Ascending aorta (tissue), 2 donors: ENCODE measurements at regions of chr10 and their contacts with region 1.

Region 1: GRCh38 chr10:95561182-95562075 is at the start of gene SORBS1:
- DNase-seq: peak; percentile 89 to 99
- H3K4me3 ChIP-seq: peak within 1 kb of the TSS; percentile 80 to 83
- H3K27ac ChIP-seq: peak within 1 kb of the TSS; percentile 78 to 91
- H3K4me1 ChIP-seq: peaks cover 0 to 6% of the 10 kb centered on the region in 2 donors
- H3K27me3 ChIP-seq: no peaks in the 10 kb centered on the region
- CTCF ChIP-seq: no peak
- total RNA-seq, gene SORBS1: 416 TPM

Region 2: GRCh38 chr10:95374597-95375209 is 186.7 kb before region 1 on chr10:
- intact Hi-C with region 1: loop called (anchors 5 kb)
- DNase-seq: peak in 1 of 2 donors; percentile 86
- H3K4me3 ChIP-seq: no peak overlapping the region
- H3K27ac ChIP-seq: peak overlapping the region; percentile 74 to 89
- H3K4me1 ChIP-seq: peaks cover 8 to 54% of the 10 kb centered on the region in 2 donors
- H3K27me3 ChIP-seq: no peaks in the 10 kb centered on the region
- CTCF ChIP-seq: peak; percentile 79 to 85 (median 85)

Region 3: DNA sequence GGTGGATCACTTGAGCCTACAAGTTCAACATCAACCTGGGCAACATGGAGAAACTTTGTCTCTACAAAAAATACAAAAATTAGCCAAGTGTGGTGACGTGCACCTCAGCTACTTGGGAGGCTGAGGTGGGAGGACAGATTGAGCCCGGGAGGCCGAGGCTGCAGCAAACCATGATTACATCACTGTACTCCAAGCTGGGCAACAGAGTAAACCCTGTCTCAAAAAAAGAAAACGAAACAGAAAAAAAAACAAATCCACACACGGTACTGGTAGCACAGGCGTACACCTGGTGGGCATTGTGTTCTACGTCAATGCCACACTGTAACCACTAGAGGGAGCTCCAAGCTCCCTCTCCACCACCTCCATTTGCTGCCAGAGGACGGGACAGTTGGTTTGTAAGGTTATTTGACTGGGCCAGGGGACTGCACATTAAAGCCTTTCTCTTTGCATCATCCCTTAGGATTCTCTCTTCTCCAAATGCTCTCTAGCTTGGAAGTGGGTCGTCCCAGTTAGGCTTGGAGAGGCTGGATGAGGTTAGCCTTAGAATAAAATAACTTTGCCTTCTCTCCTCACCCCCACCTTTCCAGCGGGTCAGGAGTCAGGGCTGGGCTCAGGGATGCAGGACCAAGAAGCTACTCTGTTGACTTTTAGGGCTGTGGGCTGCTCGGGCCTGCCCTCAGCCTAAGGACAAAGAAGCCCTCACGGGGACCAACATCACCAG is 131.0 kb before region 1 on chr10:
- intact Hi-C with region 1: loop called (anchors 5 kb)
- DNase-seq: peak in 1 of 2 donors; percentile 70
- H3K4me3 ChIP-seq: no peak overlapping the region
- H3K27ac ChIP-seq: peak overlapping the region; percentile 93 to 96
- H3K4me1 ChIP-seq: peaks cover 19 to 80% of the 10 kb centered on the region in 2 donors
- H3K27me3 ChIP-seq: no peaks in the 10 kb centered on the region
- CTCF ChIP-seq: peak; percentile 88 to 91 (median 90)

Region 4: GRCh38 chr10:95499482-95499989 is 61.9 kb before region 1 on chr10:
- intact Hi-C with region 1: loop called (anchors 10 kb)
- DNase-seq: no peak
- H3K4me3 ChIP-seq: peak overlapping the region; percentile 20 to 30
- H3K27ac ChIP-seq: peak overlapping the region; percentile 88 to 92
- H3K4me1 ChIP-seq: peaks cover 17 to 77% of the 10 kb centered on the region in 2 donors
- H3K27me3 ChIP-seq: no peaks in the 10 kb centered on the region
- CTCF ChIP-seq: no peak

Region 5: DNA sequence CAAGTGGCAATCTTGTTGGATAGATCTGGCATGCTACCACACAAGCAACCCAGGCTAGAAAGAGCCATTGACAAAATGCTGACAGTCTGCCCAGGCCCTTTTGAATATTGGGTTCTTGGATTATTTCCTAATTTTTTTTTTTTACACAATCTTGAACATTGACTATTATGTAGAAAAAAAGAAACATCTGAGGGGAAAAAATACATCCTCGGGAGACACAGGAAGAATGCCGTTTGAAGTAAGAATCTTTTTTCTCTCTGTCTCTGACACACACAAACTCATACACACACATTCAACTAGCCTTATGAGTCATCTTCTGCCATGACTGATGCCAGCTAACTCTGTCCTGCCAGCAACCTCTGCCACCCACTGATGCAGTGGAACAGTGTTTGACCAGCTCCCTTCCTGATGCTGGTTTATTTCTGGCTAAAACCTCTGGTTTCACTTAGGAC is 47.5 kb before region 1 on chr10:
- intact Hi-C with region 1: loop called (anchors 5 kb)
- DNase-seq: peak; percentile 30 to 89
- H3K4me3 ChIP-seq: no peak overlapping the region
- H3K27ac ChIP-seq: peak overlapping the region; percentile 88 to 92
- H3K4me1 ChIP-seq: peaks cover 18 to 77% of the 10 kb centered on the region in 2 donors
- H3K27me3 ChIP-seq: no peaks in the 10 kb centered on the region
- CTCF ChIP-seq: no peak

Region 6: DNA sequence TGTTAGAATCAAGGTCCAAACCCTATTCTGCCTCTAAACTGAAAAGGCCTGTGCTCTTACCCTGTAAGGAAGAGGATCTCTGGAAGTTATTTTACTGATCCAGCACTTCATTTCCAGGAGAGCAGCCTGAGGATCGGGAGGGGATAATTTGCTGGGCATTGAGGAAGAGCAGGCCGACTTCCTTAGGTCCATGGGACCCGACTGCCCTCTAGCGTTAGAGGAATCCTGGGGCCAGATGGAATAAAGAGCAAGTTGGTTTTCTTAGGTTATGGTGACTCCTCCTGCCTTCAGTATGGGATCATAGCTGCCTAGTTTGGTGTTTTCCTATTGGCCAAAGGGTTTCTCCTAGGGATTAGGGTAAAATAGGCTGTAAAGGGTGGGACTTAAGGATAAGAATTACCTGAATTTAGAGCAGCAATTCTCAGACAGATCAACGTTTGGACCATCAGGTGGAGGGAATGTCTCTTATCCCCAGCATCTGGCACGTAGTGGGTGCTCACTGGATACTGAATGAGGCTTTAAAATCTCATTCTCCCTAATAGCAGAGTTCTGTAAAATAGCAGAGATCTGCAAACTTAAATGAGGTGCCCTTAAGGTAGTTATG is 39.8 kb after region 1 on chr10:
- intact Hi-C with region 1: loop called (anchors 2 kb)
- DNase-seq: peak in 1 of 2 donors; percentile 92
- H3K4me3 ChIP-seq: no peak overlapping the region
- H3K27ac ChIP-seq: peak overlapping the region; percentile 10 to 23
- H3K4me1 ChIP-seq: peaks cover 6 to 25% of the 10 kb centered on the region in 2 donors
- H3K27me3 ChIP-seq: no peaks in the 10 kb centered on the region
- CTCF ChIP-seq: peak; percentile 89 to 93 (median 89)